Endothelial cell of umbilical vein (primary cell): ENCODE measurements at regions of chr12 and their contacts with region 1.

Region 1: DNA sequence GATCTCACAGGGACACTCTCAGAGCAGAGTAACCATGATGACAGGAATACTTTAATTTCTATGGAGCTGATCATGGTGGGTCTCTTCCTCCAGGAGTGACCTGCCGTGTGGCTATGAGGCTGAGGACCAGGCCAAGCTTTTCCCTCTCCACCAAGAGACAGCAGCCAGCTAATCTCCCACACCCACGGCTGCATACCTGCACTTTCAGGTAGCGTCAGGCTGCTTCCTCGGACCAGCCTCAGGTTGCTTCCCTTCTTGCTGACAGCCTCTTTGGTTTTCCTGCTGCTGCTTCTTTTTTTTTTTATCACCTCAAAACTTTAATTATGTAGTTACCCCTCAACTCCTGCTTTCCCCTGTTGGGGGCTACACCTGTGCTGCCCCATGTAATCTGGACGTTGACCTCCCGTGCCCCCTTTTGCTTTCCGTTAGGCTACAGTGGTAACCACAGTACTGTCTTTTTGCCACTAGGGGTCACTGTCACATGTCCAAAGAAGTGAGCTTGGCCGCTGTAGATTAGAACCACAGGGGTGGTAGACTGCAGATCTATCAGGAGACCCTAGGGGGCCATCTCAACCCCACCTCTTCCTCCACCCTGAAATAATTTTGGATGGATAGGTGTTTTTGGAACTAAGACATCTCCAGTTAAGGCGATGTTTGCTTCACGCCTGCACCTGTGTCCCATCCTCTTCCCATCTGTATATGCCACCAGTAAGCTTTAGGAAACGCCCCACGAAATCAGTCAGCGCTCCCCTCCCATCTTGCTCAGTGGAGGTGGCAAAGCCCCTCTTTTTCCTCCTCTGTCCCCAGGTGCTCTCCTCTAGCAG is 7.8 kb upstream of the PIP4K2C start:
- DNase-seq: peak; percentile 71
- H3K4me3 ChIP-seq: no peak overlapping the region
- H3K27ac ChIP-seq: no peak overlapping the region
- H3K4me1 ChIP-seq: no peaks in the 10 kb centered on the region
- H3K27me3 ChIP-seq: peaks cover 17 to 21% of the 10 kb centered on the region in 2 experiments
- CTCF ChIP-seq: peak; percentile 87 to 93
- POLR2A ChIP-seq: no peak

Region 2: DNA sequence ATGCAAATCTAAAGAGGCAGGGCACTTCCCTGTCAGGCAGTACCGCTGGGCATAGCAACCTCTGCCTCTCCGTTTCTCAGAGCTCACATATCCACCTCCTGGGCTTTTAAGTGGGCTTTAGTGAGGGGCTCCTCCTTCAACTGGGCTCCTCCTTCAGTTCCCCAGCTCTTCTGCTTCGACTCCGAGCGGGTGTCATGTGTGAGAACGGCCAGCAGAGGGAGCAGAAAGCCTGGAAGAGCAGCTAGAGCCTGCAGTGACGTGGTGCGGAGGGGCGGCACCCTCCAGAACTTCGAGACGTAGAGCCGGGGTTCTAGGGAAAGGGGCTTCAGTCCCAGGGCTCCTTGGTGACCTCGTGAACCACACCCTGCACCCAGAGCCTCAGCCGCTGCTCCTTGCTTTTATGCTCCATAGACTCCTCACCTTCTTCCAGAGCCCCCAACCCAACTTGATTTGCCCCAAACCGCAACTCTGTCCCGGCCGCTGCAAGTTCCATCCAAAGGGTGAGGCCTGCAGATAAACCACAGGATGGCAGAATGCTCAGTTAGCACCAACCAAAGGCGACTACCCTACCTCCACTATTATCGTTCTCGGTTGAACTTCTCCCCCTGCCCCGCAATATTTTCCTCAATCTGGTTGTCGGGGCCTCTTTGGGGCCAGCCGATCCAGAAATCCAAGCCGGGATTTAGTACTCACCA is 124.0 kb before region 1 on chr12:
- CTCF ChIA-PET with region 1: interaction called, 10 read pairs
- POLR2A ChIA-PET with region 1: no interaction called
- dilution Hi-C with region 1: no loop called
- intact Hi-C with region 1: no loop called
- DNase-seq: peak; percentile 93
- H3K4me3 ChIP-seq: peak overlapping the region; percentile 37 to 63 (median 55)
- H3K27ac ChIP-seq: peak overlapping the region; percentile 25
- H3K4me1 ChIP-seq: peaks cover 14% of the 10 kb centered on the region
- H3K27me3 ChIP-seq: peaks cover 5 to 10% of the 10 kb centered on the region in 2 experiments
- CTCF ChIP-seq: peak; percentile 96 to 97
- POLR2A ChIP-seq: peak; percentile 63

Region 3: GRCh38 chr12:57604454-57604991 is 21.3 kb after region 1 on chr12 and contains the start of gene DTX3:
- CTCF ChIA-PET with region 1: interaction called, 44 read pairs
- POLR2A ChIA-PET with region 1: interaction called, 4 read pairs
- dilution Hi-C with region 1: no loop called
- intact Hi-C with region 1: no loop called
- DNase-seq: peak; percentile 18
- H3K4me3 ChIP-seq: peak within 1 kb of the TSS; percentile 48 to 72 (median 56)
- H3K27ac ChIP-seq: peak within 1 kb of the TSS; percentile 23
- H3K4me1 ChIP-seq: peaks cover 6% of the 10 kb centered on the region
- H3K27me3 ChIP-seq: peaks cover 0 to 4% of the 10 kb centered on the region in 2 experiments
- CTCF ChIP-seq: no peak
- POLR2A ChIP-seq: no peak
- total RNA-seq, gene DTX3: 25.9 and 34.5 TPM in 2 replicates

Region 4: GRCh38 chr12:57621497-57622292 is 38.5 kb after region 1 on chr12:
- CTCF ChIA-PET with region 1: interaction called, 113 read pairs
- POLR2A ChIA-PET with region 1: no interaction called
- dilution Hi-C with region 1: no loop called
- intact Hi-C with region 1: loop called (anchors 1 kb)
- DNase-seq: peak; percentile 52
- H3K4me3 ChIP-seq: peak overlapping the region in 1 of 3 experiments; percentile 14
- H3K27ac ChIP-seq: no peak overlapping the region
- H3K4me1 ChIP-seq: peaks cover 5% of the 10 kb centered on the region
- H3K27me3 ChIP-seq: peaks cover 59 to 62% of the 10 kb centered on the region in 2 experiments
- CTCF ChIP-seq: peak; percentile 94 to 98
- POLR2A ChIP-seq: no peak

Region 5: GRCh38 chr12:57693659-57694458 is 110.6 kb after region 1 on chr12 and contains the start of gene OS9:
- CTCF ChIA-PET with region 1: interaction called, 25 read pairs
- POLR2A ChIA-PET with region 1: no interaction called
- dilution Hi-C with region 1: no loop called
- intact Hi-C with region 1: loop called (anchors 2 kb)
- DNase-seq: peak; percentile 100
- H3K4me3 ChIP-seq: peak within 1 kb of the TSS; percentile 38 to 77 (median 72)
- H3K27ac ChIP-seq: peak within 1 kb of the TSS; percentile 36
- H3K4me1 ChIP-seq: peaks cover 7% of the 10 kb centered on the region
- H3K27me3 ChIP-seq: no peaks in the 10 kb centered on the region
- CTCF ChIP-seq: peak; percentile 65 to 66
- POLR2A ChIP-seq: peak; percentile 92
- total RNA-seq, gene OS9: 188 and 212 TPM in 2 replicates

Region 6: GRCh38 chr12:57735952-57736740 is 152.9 kb after region 1 on chr12:
- CTCF ChIA-PET with region 1: interaction called, 8 read pairs
- POLR2A ChIA-PET with region 1: no interaction called
- dilution Hi-C with region 1: no loop called
- intact Hi-C with region 1: loop called (anchors 1 kb)
- DNase-seq: no peak
- H3K4me3 ChIP-seq: no peak overlapping the region
- H3K27ac ChIP-seq: no peak overlapping the region
- H3K4me1 ChIP-seq: peaks cover 4% of the 10 kb centered on the region
- H3K27me3 ChIP-seq: peaks cover 80 to 84% of the 10 kb centered on the region in 2 experiments
- CTCF ChIP-seq: no peak
- POLR2A ChIP-seq: no peak